ENCODE measurements at regions of chr9 and their contacts with region 1.

Region 1: DNA sequence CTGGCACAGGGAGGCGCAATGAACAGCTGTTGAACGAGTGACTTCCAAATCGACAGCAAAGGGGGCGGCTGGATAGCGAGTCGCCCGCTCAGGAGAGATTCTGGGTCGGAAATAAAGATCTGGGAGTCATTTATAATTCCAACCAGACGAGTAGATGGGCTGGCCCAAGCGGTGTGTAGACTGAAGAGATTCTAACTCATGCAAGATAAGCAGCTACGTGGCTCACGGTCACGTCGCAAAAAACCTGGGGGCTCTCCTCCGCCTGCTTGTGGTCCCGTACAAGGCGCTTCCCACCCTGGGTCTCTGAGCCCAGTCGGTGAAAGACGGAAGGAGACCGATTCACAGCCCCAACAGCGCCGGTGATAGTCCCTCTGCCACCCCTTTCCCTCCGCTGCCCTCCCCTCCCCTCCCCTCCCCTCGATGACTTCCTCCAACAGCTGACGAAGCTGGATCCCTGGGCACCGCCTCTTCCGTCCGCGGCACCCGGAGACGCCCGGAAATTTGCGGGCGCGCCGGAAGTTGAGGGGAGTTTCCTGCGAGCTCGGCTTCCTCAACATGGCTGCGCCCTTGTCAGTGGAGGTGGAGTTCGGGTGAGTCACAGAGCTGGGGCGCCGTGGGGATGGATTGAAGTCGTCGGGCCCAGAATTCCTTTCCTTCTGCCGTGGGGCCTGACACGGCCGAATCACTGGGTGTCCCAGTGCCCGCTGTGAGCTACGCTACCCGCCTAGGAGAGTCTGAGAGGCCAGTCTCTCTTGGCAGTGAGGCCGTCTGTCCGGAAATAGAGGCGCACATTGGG is at the start of gene URM1:
- DNase-seq: peak; percentile 93
- ATAC-seq: peak; percentile 95
- H3K4me3 ChIP-seq: peak within 1 kb of the TSS; percentile 87 to 92 (median 92)
- H3K27ac ChIP-seq: peak within 1 kb of the TSS; percentile 69
- H3K4me1 ChIP-seq: peaks cover 15% of the 10 kb centered on the region
- H3K27me3 ChIP-seq: peaks cover 1 to 3% of the 10 kb centered on the region in 2 experiments; a peak in 2 of 5 replicates
- CTCF ChIP-seq: peak; percentile 33
- EP300 ChIP-seq: no peak
- POLR2A ChIP-seq: peak; percentile 75 to 90
- RAD21 ChIP-seq: no peak
- total RNA-seq, gene URM1: 37.1 and 42.1 TPM in 2 replicates

Region 2: DNA sequence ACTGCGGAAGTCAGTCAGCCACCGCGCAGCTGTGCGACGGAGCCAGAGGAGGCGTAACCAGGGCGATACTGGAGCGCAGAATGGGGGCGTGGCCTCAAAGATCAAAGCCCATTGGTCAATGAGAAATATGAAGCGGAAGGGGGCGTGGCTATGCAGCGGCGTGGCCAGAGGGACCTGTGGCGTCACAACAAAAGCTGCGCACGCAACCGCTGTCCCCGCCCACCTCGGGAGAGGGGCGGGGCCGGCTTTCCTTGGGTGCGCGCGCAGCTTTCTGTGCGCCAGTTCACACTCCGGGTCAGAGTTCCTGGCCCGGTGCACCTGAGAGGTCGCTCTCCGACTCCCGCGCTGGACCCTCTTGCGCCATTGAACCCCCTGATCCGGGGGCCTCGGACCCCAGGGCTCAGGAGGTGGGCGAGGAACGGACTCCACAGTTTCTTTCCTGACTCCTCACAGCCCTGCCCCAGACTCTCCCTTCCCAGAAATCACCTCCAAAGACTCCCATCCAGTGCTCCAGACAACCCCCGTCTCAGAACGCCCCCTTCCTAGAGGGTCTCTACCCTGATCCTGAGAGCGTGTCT is 94.9 kb before region 1 on chr9 and contains the starts of genes GOLGA2 and SWI5:
- CTCF ChIA-PET with region 1: no interaction called
- POLR2A ChIA-PET with region 1: interaction called, 11 read pairs
- in situ Hi-C with region 1: no loop called
- intact Hi-C with region 1: no loop called
- DNase-seq: peak; percentile 96
- ATAC-seq: peak; percentile 96
- H3K4me3 ChIP-seq: peak within 1 kb of the TSS; percentile 91 to 98 (median 96)
- H3K27ac ChIP-seq: peak within 1 kb of the TSS; percentile 85
- H3K4me1 ChIP-seq: peaks cover 29% of the 10 kb centered on the region
- H3K27me3 ChIP-seq: no peaks in the 10 kb centered on the region; a peak in 1 of 5 replicates
- CTCF ChIP-seq: no peak; the same call in 1 of the 2 replicates
- EP300 ChIP-seq: 0 out of 4 replicates have a peak, but pooled peaks of 1 of the 2 experiments have one; percentile 1
- POLR2A ChIP-seq: peak; percentile 94 to 99
- RAD21 ChIP-seq: no peak
- total RNA-seq, gene GOLGA2: 35.4 and 45.8 TPM in 2 replicates
- total RNA-seq, gene SWI5: 39.2 and 46.5 TPM in 2 replicates

Region 3: DNA sequence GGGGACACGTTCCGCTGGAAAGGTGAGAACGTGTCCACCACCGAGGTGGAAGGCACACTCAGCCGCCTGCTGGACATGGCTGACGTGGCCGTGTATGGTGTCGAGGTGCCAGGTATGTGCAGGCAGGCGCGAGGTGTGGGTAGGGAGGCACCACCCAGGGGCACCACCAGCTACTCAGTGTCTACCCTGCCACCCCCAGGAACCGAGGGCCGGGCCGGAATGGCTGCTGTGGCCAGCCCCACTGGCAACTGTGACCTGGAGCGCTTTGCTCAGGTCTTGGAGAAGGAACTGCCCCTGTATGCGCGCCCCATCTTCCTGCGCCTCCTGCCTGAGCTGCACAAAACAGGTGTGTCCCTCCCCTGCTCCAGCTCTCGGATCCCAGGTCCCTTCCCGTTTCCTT is 15.6 kb before region 1 on chr9:
- CTCF ChIA-PET with region 1: no interaction called
- POLR2A ChIA-PET with region 1: no interaction called
- in situ Hi-C with region 1: no loop called
- intact Hi-C with region 1: no loop called
- DNase-seq: no peak
- ATAC-seq: no peak; the same call in 2 of the 3 replicates
- H3K4me3 ChIP-seq: no peak overlapping the region
- H3K27ac ChIP-seq: no peak overlapping the region
- H3K4me1 ChIP-seq: 0 out of 2 replicates have a peak, but pooled peaks cover 4% of the 10 kb centered on the region
- H3K27me3 ChIP-seq: no peaks in the 10 kb centered on the region
- CTCF ChIP-seq: no peak
- EP300 ChIP-seq: no peak
- POLR2A ChIP-seq: no peak
- RAD21 ChIP-seq: no peak

Region 4: GRCh38 chr9:128412120-128412790 is 41.2 kb after region 1 on chr9:
- CTCF ChIA-PET with region 1: interaction called, 3 read pairs
- POLR2A ChIA-PET with region 1: interaction called, 5 read pairs
- in situ Hi-C with region 1: no loop called
- intact Hi-C with region 1: loop called (anchors 2 kb)
- DNase-seq: peak; percentile 58
- ATAC-seq: peak; percentile 71
- H3K4me3 ChIP-seq: peak overlapping the region in 1 of 3 experiments; percentile 26; a peak in 1 of 6 replicates
- H3K27ac ChIP-seq: no peak overlapping the region
- H3K4me1 ChIP-seq: peaks cover 44% of the 10 kb centered on the region
- H3K27me3 ChIP-seq: peaks cover 1 to 7% of the 10 kb centered on the region in 2 experiments; a peak in 3 of 5 replicates
- CTCF ChIP-seq: peak; percentile 96
- EP300 ChIP-seq: no peak
- POLR2A ChIP-seq: no peak
- RAD21 ChIP-seq: peak; percentile 87

Region 5: GRCh38 chr9:128420060-128420650 is 49.1 kb after region 1 on chr9:
- CTCF ChIA-PET with region 1: no interaction called
- POLR2A ChIA-PET with region 1: interaction called, 19 read pairs
- in situ Hi-C with region 1: no loop called
- intact Hi-C with region 1: no loop called
- DNase-seq: peak; percentile 39
- ATAC-seq: peak; percentile 84
- H3K4me3 ChIP-seq: peak overlapping the region; percentile 85 to 92 (median 91)
- H3K27ac ChIP-seq: no peak overlapping the region
- H3K4me1 ChIP-seq: peaks cover 26% of the 10 kb centered on the region
- H3K27me3 ChIP-seq: peaks cover 4 to 8% of the 10 kb centered on the region in 2 experiments; a peak in 3 of 5 replicates
- CTCF ChIP-seq: peak; percentile 88
- EP300 ChIP-seq: no peak
- POLR2A ChIP-seq: no peak
- RAD21 ChIP-seq: peak; percentile 35; the same call in 1 of the 2 replicates

Measured in HepG2 (cell line).